Natural killer cell (primary cell): ENCODE measurements at regions of chr3 and their contacts with region 1.

Region 1: GRCh38 chr3:196073188-196073838 is 8.6 kb downstream of the TFRC start:
- DNase-seq: peak; percentile 39 to 91
- ATAC-seq: peak; percentile 90 to 99 (median 97)
- H3K4me3 ChIP-seq: no peak overlapping the region
- H3K4me3 Mint-ChIP-seq: no peak overlapping the region
- H3K27ac ChIP-seq: no peak overlapping the region
- H3K27ac Mint-ChIP-seq: peak overlapping the region in 1 of 2 donors; percentile 62
- H3K4me1 ChIP-seq: no peaks in the 10 kb centered on the region
- H3K4me1 Mint-ChIP-seq: peaks cover 4 to 9% of the 10 kb centered on the region in 2 donors
- H3K27me3 ChIP-seq: no peaks in the 10 kb centered on the region
- H3K27me3 Mint-ChIP-seq: no peaks in the 10 kb centered on the region
- CTCF ChIP-seq: peak; percentile 75

Region 2: GRCh38 chr3:196195664-196196265 is 122.5 kb after region 1 on chr3:
- intact Hi-C with region 1: loop called (anchors 1 kb)
- DNase-seq: peak in 1 of 2 donors; percentile 35
- ATAC-seq: no peak
- H3K4me3 ChIP-seq: no peak overlapping the region
- H3K4me3 Mint-ChIP-seq: no peak overlapping the region
- H3K27ac ChIP-seq: no peak overlapping the region
- H3K27ac Mint-ChIP-seq: no peak overlapping the region
- H3K4me1 ChIP-seq: peaks cover 43% of the 10 kb centered on the region
- H3K4me1 Mint-ChIP-seq: peaks cover 0 to 10% of the 10 kb centered on the region in 2 donors
- H3K27me3 ChIP-seq: no peaks in the 10 kb centered on the region
- H3K27me3 Mint-ChIP-seq: no peaks in the 10 kb centered on the region
- CTCF ChIP-seq: no peak

Region 3: DNA sequence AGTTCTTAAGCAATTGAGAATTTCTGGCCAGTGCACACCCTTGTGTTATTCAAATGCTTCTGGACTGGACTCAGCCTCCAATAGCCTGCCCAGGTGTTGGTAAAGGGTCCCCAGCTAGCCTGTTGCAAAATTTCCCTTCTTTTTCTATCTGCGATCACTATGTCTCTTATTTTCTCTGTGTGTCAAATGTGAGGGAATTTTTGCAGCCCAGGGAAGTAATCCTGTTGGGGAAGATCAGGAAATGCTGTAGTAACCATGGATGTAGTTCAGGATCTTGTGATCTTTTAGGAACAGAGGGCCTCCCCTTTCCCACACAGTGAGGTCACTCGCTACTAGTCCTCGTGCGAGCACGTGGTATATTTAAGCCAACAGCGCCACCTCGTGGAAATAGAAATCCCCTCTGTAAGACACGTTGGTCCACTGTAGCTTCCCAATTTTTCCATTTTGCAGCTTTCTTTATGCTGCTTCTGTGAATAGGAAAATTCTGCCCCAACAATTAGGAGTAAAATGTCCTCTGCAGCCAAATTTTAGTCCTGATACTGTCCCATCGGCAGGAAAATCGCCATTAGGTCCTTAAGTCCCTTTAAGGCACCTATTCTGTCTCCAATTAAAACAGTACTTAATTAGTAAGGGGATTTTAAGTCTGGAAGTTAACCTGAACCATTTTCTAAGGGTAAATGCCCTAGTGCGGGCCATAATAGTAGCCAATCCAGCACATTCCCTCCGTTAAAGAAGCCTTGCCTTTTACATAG is 445.8 kb after region 1 on chr3:
- intact Hi-C with region 1: loop called (anchors 1 kb)
- DNase-seq: peak; percentile 55 to 78
- ATAC-seq: peak in 2 of 3 donors; percentile 68 to 82
- H3K4me3 ChIP-seq: no peak overlapping the region
- H3K4me3 Mint-ChIP-seq: no peak overlapping the region
- H3K27ac ChIP-seq: no peak overlapping the region
- H3K27ac Mint-ChIP-seq: no peak overlapping the region
- H3K4me1 ChIP-seq: no peaks in the 10 kb centered on the region
- H3K4me1 Mint-ChIP-seq: no peaks in the 10 kb centered on the region
- H3K27me3 ChIP-seq: no peaks in the 10 kb centered on the region
- H3K27me3 Mint-ChIP-seq: no peaks in the 10 kb centered on the region
- CTCF ChIP-seq: peak; percentile 73